Motor neuron (in vitro differentiated cells): ENCODE measurements at regions of chr9 and their contacts with region 1.

Region 1: DNA sequence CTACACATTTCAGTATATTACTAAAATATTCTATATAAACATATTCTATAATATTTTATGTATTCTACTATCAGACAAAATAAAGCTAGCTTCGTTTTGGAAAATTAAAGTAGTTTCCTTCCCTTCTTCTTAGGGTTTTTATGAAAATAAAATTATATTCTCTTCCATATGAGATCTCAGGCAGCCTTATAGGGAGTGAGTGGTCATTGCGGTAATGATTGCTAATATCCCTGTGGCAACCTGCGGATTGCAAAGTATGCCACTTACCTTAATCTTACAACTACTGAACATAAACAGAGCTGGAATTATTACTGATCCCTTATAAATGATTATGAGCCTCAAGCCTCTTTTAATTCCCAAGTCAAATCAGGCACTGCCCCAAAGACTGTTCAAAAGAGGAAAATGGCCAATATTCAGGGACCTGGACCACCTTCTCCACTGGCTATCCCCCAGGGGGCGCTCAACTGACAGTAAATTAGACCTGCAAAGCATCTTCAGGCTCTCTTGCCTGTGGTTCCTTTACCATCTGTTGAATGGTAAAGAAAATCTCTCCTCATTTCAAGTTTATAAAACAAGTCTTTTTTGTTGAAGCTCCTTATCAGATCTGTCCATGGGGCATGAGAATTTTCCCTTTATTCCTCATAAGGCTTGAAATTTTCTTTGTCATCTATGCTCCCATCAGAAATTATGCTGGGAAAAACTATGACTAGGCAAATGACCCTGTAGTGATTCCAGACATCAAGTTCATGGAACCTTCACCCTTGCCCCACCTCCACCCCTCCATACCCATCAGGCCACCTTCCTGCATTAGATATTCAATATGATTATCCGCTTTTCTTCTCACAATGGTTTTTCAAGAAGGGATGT is 163.9 kb downstream of the CEMIP2 start:
- ATAC-seq: peak in 7 of 8 experiments; percentile 62 to 98 (median 80)
- H3K4me3 ChIP-seq: no peak overlapping the region
- H3K27ac ChIP-seq: no peak overlapping the region
- H3K4me1 ChIP-seq: no peaks in the 10 kb centered on the region

Region 2: GRCh38 chr9:71768388-71769174 is 164.2 kb after region 1 on chr9 and contains the start of gene CEMIP2:
- in situ Hi-C with region 1: loop called in 1 of 9 experiments (anchors 25 kb)
- ATAC-seq: peak; percentile 72 to 88 (median 84)
- H3K4me3 ChIP-seq: peak within 1 kb of the TSS; percentile 77 to 100 (median 97)
- H3K27ac ChIP-seq: peak within 1 kb of the TSS; percentile 90 to 92
- H3K4me1 ChIP-seq: peaks cover 14 to 27% of the 10 kb centered on the region in 2 donors
- total RNA-seq, gene CEMIP2: 31.1 to 188 (median 52.2) TPM